ENCODE measurements at regions of chr1 and their contacts with region 1.

Region 1: DNA sequence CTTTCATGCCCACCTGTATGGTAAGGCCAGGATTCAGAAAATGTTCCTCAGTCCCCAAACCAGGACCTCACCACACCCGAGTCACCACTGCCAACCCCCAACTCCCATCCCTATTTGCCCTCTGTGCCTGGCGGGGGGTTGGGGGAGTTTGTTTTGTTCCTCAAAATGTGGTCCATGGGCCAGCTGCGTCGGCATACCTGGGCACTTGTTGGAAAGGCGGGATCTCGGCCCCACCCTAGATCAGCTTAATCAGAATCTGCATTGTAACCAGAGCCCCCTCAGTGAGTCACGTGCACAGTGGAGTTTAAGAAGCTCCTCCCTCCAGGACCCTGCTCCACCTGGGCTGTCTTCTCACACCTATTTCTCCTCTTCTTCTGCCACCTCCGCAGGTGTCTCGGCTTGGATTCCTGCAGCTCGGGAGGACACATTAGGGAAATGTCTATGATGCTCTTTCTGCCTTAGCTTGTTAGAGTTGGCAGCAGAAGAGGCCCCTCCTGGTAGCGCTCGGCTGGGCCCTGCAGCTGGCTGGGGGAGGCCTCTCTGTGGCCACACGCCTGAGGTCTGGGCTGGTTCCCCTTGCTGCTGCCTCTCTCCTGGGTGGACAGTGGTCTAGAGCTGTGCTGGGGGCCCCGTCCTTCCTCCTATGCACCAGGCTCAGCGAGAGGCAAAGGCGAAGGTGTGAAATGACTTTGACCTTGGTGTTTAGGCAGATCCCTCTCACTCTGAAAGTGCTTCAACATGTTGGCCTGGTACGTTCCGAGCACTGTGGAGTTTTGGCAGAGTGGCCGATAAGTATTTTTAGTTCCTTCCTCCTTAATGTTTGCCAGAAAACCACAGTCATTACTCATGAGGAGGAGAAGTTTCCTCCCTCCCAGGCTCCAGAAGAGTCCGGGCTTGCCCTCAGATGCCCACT is 41.8 kb upstream of the CAMTA1 start:
- DNase-seq: peak in 6 of 10 donors; percentile 6 to 76 (median 48)
- ATAC-seq: peak; percentile 51 to 54
- H3K4me3 Mint-ChIP-seq: peak overlapping the region in 3 of 10 donors; percentile 16 to 31 (median 20)
- H3K27ac Mint-ChIP-seq: peak overlapping the region in 2 of 10 donors; percentile 35 to 77
- H3K4me1 Mint-ChIP-seq: peaks cover 3 to 15% (median 11%) of the 10 kb centered on the region in 4 donors
- H3K27me3 Mint-ChIP-seq: peaks cover 0 to 9% (median 8%) of the 10 kb centered on the region in 5 donors

Region 2: DNA sequence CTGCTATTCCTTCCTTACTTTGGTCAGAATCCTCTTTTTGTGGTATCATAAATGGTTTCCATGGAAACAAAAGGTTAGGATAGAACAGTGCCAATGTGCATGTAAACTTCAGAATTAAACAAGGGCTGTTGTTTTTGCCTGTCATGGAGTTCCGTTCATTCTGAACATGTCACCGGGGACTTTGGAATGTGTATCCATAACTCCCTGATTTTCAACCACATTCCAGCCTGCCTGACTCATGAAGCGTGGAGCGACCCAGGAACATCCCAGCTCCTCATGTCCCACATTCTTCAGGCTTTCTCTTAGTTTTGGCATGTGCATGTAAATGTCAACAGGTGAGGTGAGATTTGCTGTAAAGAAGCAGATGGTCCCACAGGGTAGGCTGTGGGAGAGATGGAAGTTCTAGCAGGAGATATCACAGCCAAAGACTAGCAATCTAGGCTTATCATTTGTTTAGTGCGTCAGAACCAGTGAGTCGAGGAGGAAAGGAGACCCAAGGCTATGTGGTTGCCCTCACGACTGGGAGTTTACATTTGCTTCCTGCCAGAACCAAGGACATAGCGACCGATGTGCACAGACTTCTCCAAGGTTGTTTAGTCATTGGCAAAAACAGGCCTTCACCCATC is 18.8 kb before region 1 on chr1:
- POLR2A ChIA-PET with region 1: no interaction called
- DNase-seq: no peak
- ATAC-seq: no peak
- H3K4me3 Mint-ChIP-seq: no peak overlapping the region
- H3K27ac Mint-ChIP-seq: no peak overlapping the region
- H3K4me1 Mint-ChIP-seq: no peaks in the 10 kb centered on the region
- H3K27me3 Mint-ChIP-seq: peaks cover 4 to 14% (median 9%) of the 10 kb centered on the region in 5 donors

Region 3: GRCh38 chr1:6753320-6754140 is 10.1 kb after region 1 on chr1:
- POLR2A ChIA-PET with region 1: no interaction called
- DNase-seq: no peak
- ATAC-seq: no peak
- H3K4me3 Mint-ChIP-seq: no peak overlapping the region
- H3K27ac Mint-ChIP-seq: no peak overlapping the region
- H3K4me1 Mint-ChIP-seq: peaks cover 0 to 6% (median 0%) of the 10 kb centered on the region in 4 donors
- H3K27me3 Mint-ChIP-seq: peaks cover 13 to 31% (median 28%) of the 10 kb centered on the region in 5 donors

Region 4: DNA sequence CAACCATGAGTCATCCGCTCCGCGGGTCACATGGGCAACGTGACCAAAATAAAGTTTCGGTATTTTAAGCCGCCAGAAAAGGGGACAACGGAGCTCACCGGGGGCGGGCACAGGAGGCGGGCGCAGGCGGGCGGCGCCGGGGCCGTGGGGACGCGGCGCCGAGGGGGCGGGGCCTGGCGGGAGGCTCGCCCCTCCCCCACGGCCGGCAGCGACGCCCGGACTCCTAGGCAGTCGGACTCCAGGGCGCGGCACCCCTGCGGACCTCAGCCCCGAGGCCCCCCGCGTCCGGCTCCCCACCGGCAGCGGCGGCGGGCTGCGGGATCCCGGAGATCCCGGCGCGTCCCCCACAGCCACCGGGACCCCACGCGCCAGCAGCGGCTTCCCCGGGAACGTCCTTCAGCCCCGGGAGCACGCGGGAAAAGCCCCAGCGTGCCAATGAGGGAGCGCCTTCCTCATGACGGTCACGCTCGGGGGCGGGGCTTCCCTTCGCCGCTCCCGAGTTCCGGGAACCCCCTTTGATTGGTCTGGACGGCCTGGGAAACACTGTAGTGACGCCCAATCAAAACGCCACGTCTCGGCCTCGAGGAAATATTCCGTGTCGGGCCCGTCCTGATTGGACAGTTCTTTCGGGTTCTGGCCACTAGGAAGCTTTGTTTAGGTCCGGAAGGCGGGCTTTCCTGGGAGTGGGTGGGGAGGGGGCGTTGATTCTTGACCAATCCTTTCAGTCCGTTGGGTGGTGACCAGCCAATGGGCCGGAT is 41.3 kb after region 1 on chr1:
- POLR2A ChIA-PET with region 1: interaction called, 12 read pairs
- DNase-seq: peak; percentile 77 to 100 (median 99)
- ATAC-seq: peak; percentile 82 to 86
- H3K4me3 Mint-ChIP-seq: peak overlapping the region; percentile 80 to 97 (median 91)
- H3K27ac Mint-ChIP-seq: peak overlapping the region; percentile 84 to 97 (median 94)
- H3K4me1 Mint-ChIP-seq: peaks cover 28 to 47% (median 43%) of the 10 kb centered on the region in 4 donors
- H3K27me3 Mint-ChIP-seq: no peaks in the 10 kb centered on the region

Region 5: DNA sequence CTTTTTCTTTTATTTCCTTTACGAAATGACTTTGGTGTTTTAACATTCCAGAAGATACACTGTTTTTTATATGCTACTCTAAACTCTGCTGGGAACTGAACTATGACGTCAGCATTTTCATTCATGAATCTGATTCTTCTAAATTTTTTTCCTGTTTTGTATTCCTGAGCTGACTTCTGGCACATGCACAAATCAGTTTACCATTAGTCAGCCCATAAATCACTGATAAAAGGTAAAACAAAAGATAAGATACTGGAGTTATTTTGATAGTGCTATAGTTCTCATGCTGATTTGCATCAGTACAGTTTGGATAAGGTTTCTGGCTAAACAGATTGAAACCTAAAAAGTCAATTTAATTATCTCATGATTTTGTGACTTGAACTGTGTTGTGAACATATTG is 52.2 kb after region 1 on chr1:
- POLR2A ChIA-PET with region 1: no interaction called
- DNase-seq: no peak
- ATAC-seq: no peak
- H3K4me3 Mint-ChIP-seq: no peak overlapping the region
- H3K27ac Mint-ChIP-seq: no peak overlapping the region
- H3K4me1 Mint-ChIP-seq: peaks cover 12 to 42% (median 34%) of the 10 kb centered on the region in 4 donors
- H3K27me3 Mint-ChIP-seq: no peaks in the 10 kb centered on the region

Measured in naive thymus-derived CD8-positive, alpha-beta T cell (primary cell).